Activated T-helper 1 cell treated with anti-CD3 and anti-CD28 coated beads, Interleukin-12 subunit alpha, Interleukin-12 subunit beta, Interleukin-2, Interleukin-4 antibody, amounts not matched to agents 30 ng/mL and 10 ng/mL and 1 ng/mL, durations not matched to agents 14 hours and 24 hours and 36 hours (primary cell): ENCODE measurements at regions of chr13 and their contacts with region 1.

Region 1: DNA sequence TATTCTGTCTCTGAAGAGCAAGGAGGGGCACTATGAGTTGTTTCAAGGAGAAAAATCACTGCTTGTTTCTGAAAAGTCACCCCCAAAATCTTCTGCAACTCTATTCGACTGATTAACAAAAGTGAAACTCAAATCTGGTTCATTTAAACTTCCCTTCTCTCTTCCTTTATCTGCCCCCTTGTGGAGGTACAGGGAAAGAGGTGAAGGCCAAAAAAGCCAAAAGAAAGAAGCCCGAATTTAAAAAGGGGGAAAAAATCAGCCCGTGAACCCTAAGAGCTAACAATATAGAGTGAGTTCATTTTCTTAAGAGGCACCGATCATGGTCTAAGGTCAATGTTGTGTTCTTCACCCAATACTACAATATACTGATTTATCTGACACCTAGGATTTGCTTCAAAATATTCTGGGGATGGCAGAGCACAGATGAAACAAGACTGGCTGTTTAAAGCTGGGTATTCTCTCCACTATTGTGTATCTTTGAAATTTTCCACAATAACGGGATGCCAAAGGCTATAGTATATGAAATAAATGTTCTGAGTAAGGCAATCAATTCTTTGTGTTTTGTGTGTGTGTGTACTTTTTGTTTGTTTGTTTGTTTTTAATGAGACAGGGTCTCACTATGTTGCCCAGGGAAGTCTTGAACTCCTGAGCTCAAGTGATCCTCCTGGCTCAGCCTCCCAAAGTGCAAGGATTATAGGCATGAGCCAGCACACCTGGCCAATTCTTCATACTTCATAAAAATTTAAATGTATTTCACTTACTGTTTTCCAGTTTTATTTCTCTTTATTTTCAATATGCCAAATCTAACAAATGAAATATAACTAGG is 55.0 kb upstream of the EEF1AKMT1 start:
- DNase-seq: peak; percentile 28
- H3K4me3 Mint-ChIP-seq: no peak overlapping the region
- H3K27ac Mint-ChIP-seq: no peak overlapping the region
- H3K4me1 Mint-ChIP-seq: peaks cover 8% of the 10 kb centered on the region
- H3K27me3 Mint-ChIP-seq: no peaks in the 10 kb centered on the region

Region 2: DNA sequence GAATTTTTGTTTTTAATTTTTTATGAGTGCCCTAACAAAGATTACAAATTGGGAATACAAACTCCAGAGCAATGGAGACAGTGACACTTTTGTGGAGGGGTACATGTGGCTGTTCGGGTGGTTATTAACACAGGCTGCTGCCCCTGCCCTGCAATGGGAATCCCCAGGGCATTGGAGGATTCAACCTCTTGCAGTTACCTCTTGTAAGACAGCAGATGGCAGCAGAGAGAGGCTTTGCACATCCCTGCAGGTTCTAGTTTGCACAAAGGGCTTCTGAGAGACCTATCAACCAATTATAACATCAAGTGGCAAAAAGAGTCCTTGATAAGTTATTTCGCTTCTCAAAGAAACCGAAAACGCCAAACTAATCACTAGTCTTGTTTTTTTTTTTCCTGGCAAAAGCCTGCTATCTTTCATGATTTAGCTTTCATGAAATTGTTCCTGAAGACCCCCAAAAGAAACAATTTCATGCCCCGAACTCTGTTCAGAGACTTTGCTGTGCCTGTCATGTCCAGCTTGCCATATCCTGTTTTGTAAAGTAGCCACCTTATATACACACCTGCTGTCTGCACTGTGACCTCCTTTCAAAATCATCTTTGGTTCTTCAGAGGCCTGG is 646.4 kb before region 1 on chr13:
- intact Hi-C with region 1: loop called (anchors 5 kb)
- DNase-seq: no peak
- H3K4me3 Mint-ChIP-seq: no peak overlapping the region
- H3K27ac Mint-ChIP-seq: no peak overlapping the region
- H3K4me1 Mint-ChIP-seq: no peaks in the 10 kb centered on the region
- H3K27me3 Mint-ChIP-seq: peaks cover 25% of the 10 kb centered on the region

Region 3: GRCh38 chr13:20711301-20712044 is 117.3 kb before region 1 on chr13:
- intact Hi-C with region 1: loop called (anchors 1 kb)
- DNase-seq: no peak
- H3K4me3 Mint-ChIP-seq: no peak overlapping the region
- H3K27ac Mint-ChIP-seq: no peak overlapping the region
- H3K4me1 Mint-ChIP-seq: peaks cover 19% of the 10 kb centered on the region
- H3K27me3 Mint-ChIP-seq: peaks cover 18% of the 10 kb centered on the region

Region 4: GRCh38 chr13:20924758-20925394 is 96.1 kb after region 1 on chr13:
- intact Hi-C with region 1: loop called (anchors 2 kb)
- DNase-seq: peak; percentile 48
- H3K4me3 Mint-ChIP-seq: no peak overlapping the region
- H3K27ac Mint-ChIP-seq: no peak overlapping the region
- H3K4me1 Mint-ChIP-seq: no peaks in the 10 kb centered on the region
- H3K27me3 Mint-ChIP-seq: peaks cover 2% of the 10 kb centered on the region